Gastrocnemius medialis (tissue), 4 donors: ENCODE measurements at regions of chr1 and their contacts with region 1.

Region 1: DNA sequence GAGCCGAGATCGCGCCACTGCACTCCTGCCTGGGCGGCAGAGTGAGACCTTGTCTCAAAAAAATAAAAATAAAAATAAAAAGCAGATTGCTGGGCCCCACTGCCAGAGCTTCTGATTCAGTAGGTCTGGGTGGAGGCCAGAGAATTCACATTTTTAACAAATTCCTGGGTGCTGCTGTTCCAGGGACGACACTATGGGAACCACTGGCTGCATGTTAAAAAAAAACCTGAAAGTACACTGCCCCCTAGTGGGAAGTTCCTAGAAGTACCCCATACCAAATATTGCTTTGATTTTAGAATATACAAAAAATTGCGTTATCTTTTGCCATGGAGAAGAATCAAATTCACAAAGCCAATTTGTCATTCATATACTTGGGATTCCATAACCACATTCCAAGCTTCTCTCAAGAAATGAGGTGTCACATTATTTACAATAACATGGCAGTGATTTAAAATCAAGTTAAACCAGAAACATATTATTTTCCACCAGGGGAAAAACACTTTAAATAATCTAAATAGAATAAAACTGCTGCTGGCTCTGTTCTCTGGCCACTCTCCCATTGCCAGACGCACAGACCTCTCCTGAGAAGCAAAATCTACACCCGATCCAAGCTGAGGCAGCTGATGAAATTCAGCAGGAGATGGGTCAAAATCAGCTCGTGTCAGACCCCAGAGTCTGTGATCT is 27.4 kb downstream of the SYF2 start:
- DNase-seq: no peak
- ATAC-seq: peak in 1 of 2 donors; percentile 39
- H3K4me3 ChIP-seq: no peak overlapping the region
- H3K27ac ChIP-seq: no peak overlapping the region
- H3K4me1 ChIP-seq: peaks cover 1 to 3% of the 10 kb centered on the region in 2 donors
- H3K27me3 ChIP-seq: peaks cover 0 to 3% (median 0%) of the 10 kb centered on the region in 3 donors
- CTCF ChIP-seq: peak; percentile 38 to 82 (median 60)
- POLR2A ChIP-seq: no peak

Region 2: DNA sequence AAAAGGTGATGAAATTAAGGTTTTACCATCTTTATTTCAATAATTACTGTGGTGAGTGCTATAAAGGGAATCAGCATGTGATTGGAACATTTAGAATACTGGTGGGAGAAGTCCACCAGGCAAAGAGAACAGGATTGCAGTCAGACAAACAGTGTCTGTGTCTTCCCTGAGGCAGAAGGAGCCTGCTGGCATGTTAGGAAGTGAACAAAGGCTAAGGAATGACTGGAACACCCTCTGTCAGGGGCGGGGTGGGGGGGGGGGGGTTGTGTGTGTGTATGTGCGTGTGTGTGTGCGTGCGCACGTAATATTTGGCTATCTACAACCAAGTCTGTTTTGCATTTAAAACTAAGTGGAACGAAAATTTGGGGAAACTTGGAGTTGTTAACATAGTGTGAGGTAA is 531.6 kb before region 1 on chr1:
- in situ Hi-C with region 1: loop called in 2 of 4 experiments (anchors 25 kb)
- intact Hi-C with region 1: no loop called
- DNase-seq: no peak
- ATAC-seq: no peak
- H3K4me3 ChIP-seq: no peak overlapping the region
- H3K27ac ChIP-seq: no peak overlapping the region
- H3K4me1 ChIP-seq: no peaks in the 10 kb centered on the region
- H3K27me3 ChIP-seq: no peaks in the 10 kb centered on the region
- CTCF ChIP-seq: no peak
- POLR2A ChIP-seq: no peak

Region 3: DNA sequence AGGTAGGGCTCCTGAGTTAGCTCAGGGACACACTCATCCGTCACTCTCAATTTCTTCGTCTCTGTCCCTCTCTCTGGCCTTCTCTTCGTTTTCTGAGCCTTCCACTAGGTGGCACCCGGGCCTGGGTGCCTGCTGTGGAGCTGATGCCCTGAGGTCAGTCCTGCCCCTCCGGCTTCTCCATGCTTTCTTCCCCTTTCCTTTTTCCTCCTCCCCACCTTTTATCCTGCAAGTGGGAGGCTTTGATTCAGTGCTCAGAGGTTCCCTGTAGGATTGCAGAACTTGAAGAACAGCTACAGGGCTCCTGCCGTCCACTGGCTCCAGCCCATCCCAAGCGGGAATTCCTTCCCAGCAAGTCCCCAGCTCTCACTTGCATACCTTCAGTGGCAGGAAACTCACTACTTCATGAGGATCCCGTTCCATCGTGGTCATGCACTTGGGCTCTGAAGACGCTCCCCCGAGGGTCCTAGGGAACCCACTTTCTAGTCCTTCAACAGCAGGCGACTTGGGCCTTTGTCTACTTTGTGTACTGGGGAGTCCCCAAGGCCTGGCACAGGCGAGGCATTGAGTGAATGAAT is 516.2 kb before region 1 on chr1:
- in situ Hi-C with region 1: loop called in 1 of 4 experiments (anchors 25 kb)
- intact Hi-C with region 1: no loop called
- DNase-seq: peak; percentile 32 to 48
- ATAC-seq: peak; percentile 63 to 78
- H3K4me3 ChIP-seq: no peak overlapping the region
- H3K27ac ChIP-seq: no peak overlapping the region
- H3K4me1 ChIP-seq: no peaks in the 10 kb centered on the region
- H3K27me3 ChIP-seq: no peaks in the 10 kb centered on the region
- CTCF ChIP-seq: peak; percentile 67 to 86 (median 82)
- POLR2A ChIP-seq: no peak

Region 4: DNA sequence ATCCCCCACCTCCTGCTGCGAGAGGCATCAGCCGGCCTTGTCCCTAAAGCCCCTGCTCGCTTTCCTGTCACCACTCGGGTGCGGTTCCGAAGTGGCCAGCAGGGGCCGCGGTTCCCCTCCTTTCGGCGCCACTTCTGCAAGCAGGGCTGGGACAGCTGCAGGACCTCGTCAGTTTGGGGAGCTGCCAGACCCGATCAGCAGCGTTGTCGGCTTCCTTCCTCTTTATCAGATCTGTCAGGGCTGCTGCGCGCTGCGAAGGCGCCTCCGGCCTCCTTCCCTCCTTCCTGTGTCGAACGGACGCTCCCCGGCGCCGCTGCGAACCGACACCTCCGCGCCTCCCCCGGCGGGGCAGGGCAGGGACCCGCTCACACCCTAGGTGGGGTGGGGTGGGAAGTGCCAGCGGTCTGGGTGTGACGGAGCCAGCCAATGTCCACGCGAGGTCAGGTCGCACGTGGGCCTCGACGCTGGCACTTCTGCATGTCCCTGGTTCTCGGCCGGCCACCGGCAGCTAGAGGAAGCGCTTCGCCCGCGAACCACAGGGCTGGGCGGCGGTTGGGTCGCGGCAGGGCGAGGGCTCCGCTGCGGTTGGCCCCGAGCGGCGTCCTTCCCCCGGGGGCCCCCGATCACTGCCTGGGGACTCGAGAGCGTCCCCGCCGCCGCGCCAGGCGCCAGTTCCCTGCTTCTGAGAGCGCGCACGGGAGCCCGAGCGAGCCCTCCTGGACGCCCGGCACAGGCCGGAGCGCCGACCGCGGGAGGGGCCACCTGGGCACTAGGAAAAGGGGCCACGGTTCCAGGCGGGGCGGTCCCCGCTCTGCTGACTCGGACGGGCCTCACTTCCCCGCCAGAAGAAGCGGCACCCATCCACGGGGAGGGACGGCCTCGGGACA is 356.7 kb before region 1 on chr1:
- in situ Hi-C with region 1: loop called in 1 of 4 experiments (anchors 10 kb)
- intact Hi-C with region 1: loop called (anchors 5 kb)
- DNase-seq: peak; percentile 79 to 81
- ATAC-seq: peak; percentile 93 to 94
- H3K4me3 ChIP-seq: peak overlapping the region; percentile 54 to 67 (median 61)
- H3K27ac ChIP-seq: peak overlapping the region in 3 of 4 donors; percentile 15 to 55 (median 36)
- H3K4me1 ChIP-seq: no peaks in the 10 kb centered on the region
- H3K27me3 ChIP-seq: no peaks in the 10 kb centered on the region
- CTCF ChIP-seq: peak; percentile 73 to 95 (median 91)
- POLR2A ChIP-seq: no peak

Region 5: GRCh38 chr1:24930204-24931145 is 274.5 kb before region 1 on chr1 and contains the start of gene RUNX3:
- in situ Hi-C with region 1: no loop called
- intact Hi-C with region 1: loop called (anchors 10 kb)
- DNase-seq: peak in 1 of 2 donors; percentile 22
- ATAC-seq: no peak
- H3K4me3 ChIP-seq: peak within 1 kb of the TSS in 3 of 4 donors; percentile 25 to 43 (median 28)
- H3K27ac ChIP-seq: no peak within 1 kb of the TSS
- H3K4me1 ChIP-seq: peaks cover 10 to 17% of the 10 kb centered on the region in 2 donors
- H3K27me3 ChIP-seq: peaks cover 85 to 93% (median 91%) of the 10 kb centered on the region in 3 donors
- CTCF ChIP-seq: no peak
- POLR2A ChIP-seq: no peak
- total RNA-seq, gene RUNX3: 0.13 to 1.9 (median 0.74) TPM

Region 6: DNA sequence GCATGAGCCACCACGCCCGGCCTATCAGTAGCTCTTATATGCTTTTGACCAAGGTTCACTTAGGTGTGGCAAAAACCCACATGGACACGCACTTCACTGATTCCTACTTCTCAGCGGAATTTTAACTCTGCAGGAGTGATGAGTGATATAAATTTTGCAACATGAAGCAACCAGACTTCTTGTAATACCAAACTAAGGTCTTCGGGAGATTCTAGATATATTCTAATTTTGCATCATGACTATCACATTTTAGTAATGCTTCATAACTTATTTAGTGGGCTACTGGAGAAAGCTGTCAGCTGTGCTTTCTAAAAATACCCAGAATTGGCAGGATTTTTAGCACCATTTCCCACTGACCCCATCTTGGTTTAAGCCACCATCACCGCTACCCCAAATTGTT is 187.9 kb after region 1 on chr1:
- in situ Hi-C with region 1: no loop called
- intact Hi-C with region 1: no loop called
- DNase-seq: no peak
- ATAC-seq: no peak
- H3K4me3 ChIP-seq: no peak overlapping the region
- H3K27ac ChIP-seq: no peak overlapping the region
- H3K4me1 ChIP-seq: no peaks in the 10 kb centered on the region
- H3K27me3 ChIP-seq: no peaks in the 10 kb centered on the region
- CTCF ChIP-seq: no peak
- POLR2A ChIP-seq: no peak